Ascending aorta (tissue), 2 donors: ENCODE measurements at regions of chr14 and their contacts with region 1.

Region 1: GRCh38 chr14:61585598-61586543 is 109.4 kb upstream of the HIF1A start:
- DNase-seq: peak; percentile 39 to 91
- H3K4me3 ChIP-seq: no peak overlapping the region
- H3K27ac ChIP-seq: peak overlapping the region; percentile 85 to 86
- H3K4me1 ChIP-seq: peaks cover 22 to 26% of the 10 kb centered on the region in 2 donors
- H3K27me3 ChIP-seq: no peaks in the 10 kb centered on the region
- CTCF ChIP-seq: no peak

Region 2: GRCh38 chr14:61525293-61526011 is 60.4 kb before region 1 on chr14:
- intact Hi-C with region 1: loop called (anchors 2 kb)
- DNase-seq: peak; percentile 88 to 92
- H3K4me3 ChIP-seq: peak overlapping the region in 1 of 2 donors; percentile 5
- H3K27ac ChIP-seq: peak overlapping the region; percentile 86 to 88
- H3K4me1 ChIP-seq: peaks cover 17 to 40% of the 10 kb centered on the region in 2 donors
- H3K27me3 ChIP-seq: no peaks in the 10 kb centered on the region
- CTCF ChIP-seq: no peak

Region 3: GRCh38 chr14:61547186-61548086 is 38.4 kb before region 1 on chr14:
- intact Hi-C with region 1: loop called (anchors 5 kb)
- DNase-seq: peak in 1 of 2 donors; percentile 79
- H3K4me3 ChIP-seq: no peak overlapping the region
- H3K27ac ChIP-seq: peak overlapping the region; percentile 52 to 70
- H3K4me1 ChIP-seq: peaks cover 18 to 25% of the 10 kb centered on the region in 2 donors
- H3K27me3 ChIP-seq: no peaks in the 10 kb centered on the region
- CTCF ChIP-seq: no peak

Region 4: DNA sequence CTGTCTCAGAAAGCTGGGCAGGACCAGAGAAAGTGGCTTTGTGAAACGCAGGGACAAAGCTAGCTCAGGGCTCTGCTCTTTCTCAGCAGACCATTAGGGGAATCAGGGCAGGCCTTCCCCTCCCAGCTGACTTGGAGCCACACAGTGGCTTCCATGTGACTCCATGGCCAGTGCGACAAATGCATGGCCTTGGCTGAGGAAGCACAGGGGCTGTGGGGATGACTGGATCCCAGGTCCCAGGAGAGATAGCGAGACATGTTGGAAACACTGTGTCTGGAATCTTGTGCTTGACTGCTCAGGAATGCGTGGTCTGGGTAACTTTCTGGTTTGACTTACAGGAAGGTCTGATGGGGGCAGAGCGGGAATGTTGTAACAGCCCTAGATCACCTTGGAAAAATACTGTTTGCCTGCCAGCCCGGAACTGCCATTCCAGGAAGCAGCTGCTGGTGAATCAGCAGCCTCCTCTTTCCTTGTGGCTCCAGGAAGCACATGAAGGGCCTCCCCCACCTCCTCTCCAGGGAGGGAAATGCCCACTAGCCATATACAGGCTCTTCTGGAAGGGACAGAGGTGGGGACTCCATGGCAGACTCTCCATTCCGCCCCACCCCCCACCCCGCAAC is 24.1 kb before region 1 on chr14:
- intact Hi-C with region 1: loop called (anchors 2 kb)
- DNase-seq: peak; percentile 59 to 91
- H3K4me3 ChIP-seq: no peak overlapping the region
- H3K27ac ChIP-seq: peak overlapping the region; percentile 66 to 71
- H3K4me1 ChIP-seq: peaks cover 0 to 12% of the 10 kb centered on the region in 2 donors
- H3K27me3 ChIP-seq: no peaks in the 10 kb centered on the region
- CTCF ChIP-seq: no peak

Region 5: DNA sequence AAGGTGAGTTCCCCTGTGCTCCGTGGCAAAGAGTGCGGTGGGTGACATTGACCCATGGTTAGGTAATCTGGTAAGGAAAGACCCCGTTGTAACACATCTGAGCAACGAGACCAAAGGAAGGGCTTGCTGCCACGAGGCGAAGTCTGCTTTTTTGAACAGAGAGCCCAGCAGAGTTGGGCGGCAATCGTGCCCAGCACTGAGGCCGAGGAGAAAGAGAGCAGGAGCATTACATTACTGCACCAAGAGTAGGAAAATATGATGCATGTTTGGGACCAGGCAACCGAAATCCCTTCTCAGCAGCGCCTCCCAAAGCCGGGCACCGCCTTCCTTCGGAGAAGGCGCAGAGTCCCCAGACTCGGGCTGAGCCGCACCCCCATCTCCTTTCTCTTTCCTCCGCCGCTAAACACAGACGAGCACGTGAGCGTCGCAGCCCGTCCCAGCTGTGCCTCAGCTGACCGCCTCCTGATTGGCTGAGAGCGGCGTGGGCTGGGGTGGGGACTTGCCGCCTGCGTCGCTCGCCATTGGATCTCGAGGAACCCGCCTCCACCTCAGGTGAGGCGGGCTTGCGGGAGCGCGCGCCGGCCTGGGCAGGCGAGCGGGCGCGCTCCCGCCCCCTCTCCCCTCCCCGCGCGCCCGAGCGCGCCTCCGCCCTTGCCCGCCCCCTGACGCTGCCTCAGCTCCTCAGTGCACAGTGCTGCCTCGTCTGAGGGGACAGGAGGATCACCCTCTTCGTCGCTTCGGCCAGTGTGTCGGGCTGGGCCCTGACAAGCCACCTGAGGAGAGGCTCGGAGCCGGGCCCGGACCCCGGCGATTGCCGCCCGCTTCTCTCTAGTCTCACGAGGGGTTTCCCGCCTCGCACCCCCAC is 109.2 kb after region 1 on chr14 and contains the start of gene HIF1A:
- intact Hi-C with region 1: loop called (anchors 2 kb)
- DNase-seq: peak; percentile 91 to 98
- H3K4me3 ChIP-seq: peak within 1 kb of the TSS; percentile 95
- H3K27ac ChIP-seq: peak within 1 kb of the TSS; percentile 96 to 98
- H3K4me1 ChIP-seq: peaks cover 3 to 6% of the 10 kb centered on the region in 2 donors
- H3K27me3 ChIP-seq: no peaks in the 10 kb centered on the region
- CTCF ChIP-seq: no peak
- total RNA-seq, gene HIF1A: 87.0 TPM